ENCODE measurements at regions of chr19 and their contacts with region 1.

Region 1: GRCh38 chr19:11781295-11782052 is 14.7 kb downstream of the ZNF441 start:
- DNase-seq: no peak
- H3K4me3 ChIP-seq: no peak overlapping the region
- H3K27ac ChIP-seq: no peak overlapping the region
- H3K4me1 ChIP-seq: no peaks in the 10 kb centered on the region
- H3K27me3 ChIP-seq: no peaks in the 10 kb centered on the region
- CTCF ChIP-seq: no peak
- POLR2A ChIP-seq: no peak

Region 2: DNA sequence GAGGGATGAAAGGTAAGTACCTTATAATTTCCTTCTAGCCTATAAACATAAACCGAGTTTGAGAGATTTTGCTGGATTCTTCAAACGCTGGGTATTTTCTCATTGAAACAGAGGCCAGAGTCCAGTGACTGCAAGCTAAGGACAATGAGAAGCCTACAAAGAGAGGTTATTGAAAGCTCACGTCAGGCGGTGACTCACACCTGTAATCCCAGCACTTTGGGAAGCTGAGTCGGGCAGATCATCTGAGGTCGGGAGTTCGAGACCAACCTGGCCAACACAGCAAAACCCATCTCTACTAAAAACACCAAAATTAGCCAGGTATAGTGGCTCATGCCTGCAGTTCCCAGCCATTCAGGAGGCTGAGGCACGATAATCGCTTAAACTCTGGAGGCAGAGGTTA is 91.2 kb after region 1 on chr19:
- intact Hi-C with region 1: no loop called
- DNase-seq: no peak
- H3K4me3 ChIP-seq: no peak overlapping the region
- H3K27ac ChIP-seq: no peak overlapping the region
- H3K4me1 ChIP-seq: no peaks in the 10 kb centered on the region
- H3K27me3 ChIP-seq: no peaks in the 10 kb centered on the region
- CTCF ChIP-seq: no peak
- POLR2A ChIP-seq: no peak

Region 3: GRCh38 chr19:12465211-12465610 is 683.7 kb after region 1 on chr19:
- intact Hi-C with region 1: loop called (anchors 5 kb)
- DNase-seq: no peak
- H3K4me3 ChIP-seq: no peak overlapping the region
- H3K27ac ChIP-seq: no peak overlapping the region
- H3K4me1 ChIP-seq: no peaks in the 10 kb centered on the region
- H3K27me3 ChIP-seq: no peaks in the 10 kb centered on the region
- CTCF ChIP-seq: no peak
- POLR2A ChIP-seq: no peak